WTC11 (cell line): ENCODE measurements at regions of chr10 and their contacts with region 1.

Region 1: DNA sequence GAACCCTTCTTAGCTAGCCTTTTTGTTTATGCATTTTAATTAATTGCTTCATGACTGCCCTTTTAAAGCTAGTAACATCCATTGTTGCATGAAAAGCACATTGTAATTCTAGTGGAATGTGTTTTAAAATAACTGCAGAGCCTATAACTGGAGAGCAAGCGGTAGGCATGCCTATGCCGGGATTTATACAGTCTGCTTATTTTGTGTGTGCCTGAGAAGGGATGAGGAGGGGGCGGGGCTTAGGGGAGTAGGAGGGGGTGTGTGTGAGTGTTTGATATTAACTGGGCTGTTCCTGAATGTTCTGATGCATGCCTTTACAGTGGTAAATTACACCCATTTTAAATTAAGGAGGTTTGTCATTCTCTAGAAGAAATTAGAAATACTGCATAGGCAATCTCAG is 208.1 kb downstream of the TCF7L2 start:
- DNase-seq: no peak
- ATAC-seq: peak; percentile 57
- H3K4me3 Mint-ChIP-seq: no peak overlapping the region
- H3K27ac Mint-ChIP-seq: no peak overlapping the region
- H3K4me1 Mint-ChIP-seq: peaks cover 42% of the 10 kb centered on the region
- H3K27me3 Mint-ChIP-seq: no peaks in the 10 kb centered on the region
- CTCF ChIP-seq: no peak

Region 2: DNA sequence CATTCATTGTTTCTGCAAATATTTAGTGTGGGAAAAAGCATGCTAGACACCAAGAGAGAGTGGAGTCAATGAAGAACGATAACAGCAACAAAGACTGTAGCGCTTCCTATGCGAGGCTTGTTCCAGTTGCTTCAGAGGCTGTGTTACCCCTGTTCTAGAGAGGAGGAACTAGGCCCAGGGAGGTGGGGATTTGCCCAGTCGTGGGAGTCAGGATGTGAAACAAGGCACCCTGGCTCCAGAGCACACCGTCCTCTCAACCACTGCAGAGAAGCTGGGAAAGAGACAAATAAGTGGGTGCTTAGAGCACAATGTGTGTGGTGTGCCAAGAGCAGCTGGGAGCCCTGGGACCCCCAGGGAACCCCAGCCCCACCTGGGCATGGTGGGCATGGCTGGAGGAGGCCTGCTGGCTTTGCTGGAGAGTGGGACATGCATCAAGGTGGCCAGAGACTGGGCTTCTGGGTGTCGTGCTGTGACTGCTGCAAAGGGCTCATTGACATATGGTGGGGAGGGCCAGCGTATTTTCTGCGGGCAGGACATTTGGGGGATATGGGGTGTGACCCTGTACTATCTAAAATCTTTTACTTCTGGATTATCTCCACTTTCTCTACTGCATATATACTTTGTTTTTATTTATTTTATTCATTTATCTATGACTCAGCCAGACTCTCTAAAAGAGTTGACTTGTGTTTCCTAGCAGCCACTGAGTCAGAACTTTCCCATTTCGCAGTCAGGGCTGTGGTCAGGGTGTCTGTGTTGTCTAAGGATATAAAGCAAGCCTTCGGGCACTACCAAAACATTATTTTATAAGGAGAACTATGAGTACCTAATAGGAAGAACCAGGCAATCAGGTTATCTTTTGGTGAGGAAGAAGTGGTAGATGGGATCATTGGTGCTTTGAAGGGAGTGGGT is 112.8 kb before region 1 on chr10:
- CTCF ChIA-PET with region 1: no interaction called
- POLR2A ChIA-PET with region 1: no interaction called
- DNase-seq: no peak
- ATAC-seq: no peak
- H3K4me3 Mint-ChIP-seq: no peak overlapping the region
- H3K27ac Mint-ChIP-seq: peak overlapping the region; percentile 27
- H3K4me1 Mint-ChIP-seq: peaks cover 81% of the 10 kb centered on the region
- H3K27me3 Mint-ChIP-seq: no peaks in the 10 kb centered on the region
- CTCF ChIP-seq: no peak

Region 3: GRCh38 chr10:113087165-113088029 is 70.8 kb before region 1 on chr10:
- CTCF ChIA-PET with region 1: no interaction called
- POLR2A ChIA-PET with region 1: no interaction called
- DNase-seq: no peak
- ATAC-seq: peak; percentile 79
- H3K4me3 Mint-ChIP-seq: no peak overlapping the region; the same call in 1 of the 2 replicates
- H3K27ac Mint-ChIP-seq: peak overlapping the region; percentile 95
- H3K4me1 Mint-ChIP-seq: peaks cover 66% of the 10 kb centered on the region
- H3K27me3 Mint-ChIP-seq: no peaks in the 10 kb centered on the region
- CTCF ChIP-seq: no peak

Region 4: GRCh38 chr10:113111859-113112853 is 46.0 kb before region 1 on chr10:
- CTCF ChIA-PET with region 1: no interaction called
- POLR2A ChIA-PET with region 1: interaction called, 10 read pairs
- DNase-seq: no peak
- ATAC-seq: no peak
- H3K4me3 Mint-ChIP-seq: no peak overlapping the region
- H3K27ac Mint-ChIP-seq: no peak overlapping the region
- H3K4me1 Mint-ChIP-seq: peaks cover 39% of the 10 kb centered on the region
- H3K27me3 Mint-ChIP-seq: no peaks in the 10 kb centered on the region
- CTCF ChIP-seq: no peak